Heart right ventricle (tissue), 16 donors: ENCODE measurements at regions of chr3 and their contacts with region 1.

Region 1: DNA sequence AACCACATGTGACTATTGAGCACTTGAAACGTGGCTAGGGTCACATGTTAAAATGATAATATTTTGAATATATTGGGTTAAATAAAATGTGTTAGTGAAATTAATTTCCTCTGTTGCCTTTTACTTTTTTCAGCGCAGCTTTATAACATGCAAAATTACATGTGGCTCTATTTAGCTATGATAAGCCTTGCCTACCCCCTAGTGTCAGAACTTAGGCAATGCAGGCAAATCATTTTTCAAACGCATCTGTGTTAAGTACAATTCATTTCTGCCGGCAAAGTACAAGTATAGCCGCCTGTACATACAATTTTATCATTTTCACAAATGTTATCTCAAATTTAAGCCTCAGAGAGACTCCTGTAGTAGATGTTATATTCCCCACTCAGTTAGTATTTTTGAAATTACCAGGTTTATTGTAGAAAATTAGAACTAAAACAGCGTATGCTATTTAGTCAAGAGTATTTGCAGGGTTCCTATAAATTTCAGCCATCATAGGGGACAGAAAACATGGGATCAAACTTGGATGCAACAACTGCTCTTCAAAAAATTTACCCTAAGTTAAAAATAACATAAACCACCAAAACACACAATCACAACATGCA is 56.1 kb downstream of the TAFA4 start:
- DNase-seq: peak in 1 of 2 donors; percentile 14
- ATAC-seq: peak in 2 of 8 donors; percentile 51 to 54
- H3K4me3 ChIP-seq: no peak overlapping the region
- H3K27ac ChIP-seq: no peak overlapping the region
- H3K4me1 ChIP-seq: no peaks in the 10 kb centered on the region
- H3K27me3 ChIP-seq: peaks cover 0 to 69% (median 13%) of the 10 kb centered on the region in 7 donors
- CTCF ChIP-seq: peak; percentile 73 to 90 (median 84)

Region 2: DNA sequence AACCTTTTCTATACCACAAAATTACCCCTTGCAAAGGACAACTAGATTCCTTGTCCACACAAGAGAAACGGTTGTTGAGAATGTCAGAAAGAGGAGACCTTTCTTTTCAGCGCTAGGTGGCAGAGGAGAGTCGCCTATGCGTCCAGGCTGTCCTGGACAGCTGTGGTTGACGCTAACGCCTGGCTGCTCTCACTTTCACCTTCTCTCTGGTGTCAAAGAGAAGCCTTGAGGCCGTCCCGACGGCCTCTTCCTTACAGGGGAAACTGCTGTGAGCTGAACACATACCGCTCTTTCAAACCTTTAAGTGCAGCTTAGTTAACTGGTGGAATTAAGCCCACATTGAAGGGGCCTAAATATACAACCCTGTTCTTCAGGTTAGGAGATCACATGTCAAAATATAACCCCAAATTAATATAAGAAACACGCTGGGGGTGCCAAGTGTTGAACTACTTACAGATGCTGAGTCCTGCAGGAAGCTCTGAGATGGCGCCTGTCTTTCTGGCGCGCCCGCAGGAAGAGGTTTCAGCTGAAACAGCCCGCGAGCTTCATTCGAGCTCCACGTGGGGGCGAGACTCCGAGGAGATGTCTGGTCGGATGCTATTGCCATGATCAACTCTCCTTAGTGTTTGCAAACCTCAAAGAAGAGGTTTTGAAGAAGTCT is 1904.2 kb before region 1 on chr3:
- intact Hi-C with region 1: loop called in 2 of 10 experiments (anchors 10 kb)
- DNase-seq: peak; percentile 58 to 76
- ATAC-seq: peak; percentile 92 to 99 (median 96)
- H3K4me3 ChIP-seq: peak overlapping the region in 9 of 10 donors; percentile 12 to 52 (median 42)
- H3K27ac ChIP-seq: peak overlapping the region in 4 of 10 donors; percentile 2 to 55 (median 28)
- H3K4me1 ChIP-seq: peaks cover 0 to 13% (median 6%) of the 10 kb centered on the region in 9 donors
- H3K27me3 ChIP-seq: peaks cover 0 to 14% (median 7%) of the 10 kb centered on the region in 7 donors
- CTCF ChIP-seq: peak; percentile 66 to 91 (median 86)

Region 3: DNA sequence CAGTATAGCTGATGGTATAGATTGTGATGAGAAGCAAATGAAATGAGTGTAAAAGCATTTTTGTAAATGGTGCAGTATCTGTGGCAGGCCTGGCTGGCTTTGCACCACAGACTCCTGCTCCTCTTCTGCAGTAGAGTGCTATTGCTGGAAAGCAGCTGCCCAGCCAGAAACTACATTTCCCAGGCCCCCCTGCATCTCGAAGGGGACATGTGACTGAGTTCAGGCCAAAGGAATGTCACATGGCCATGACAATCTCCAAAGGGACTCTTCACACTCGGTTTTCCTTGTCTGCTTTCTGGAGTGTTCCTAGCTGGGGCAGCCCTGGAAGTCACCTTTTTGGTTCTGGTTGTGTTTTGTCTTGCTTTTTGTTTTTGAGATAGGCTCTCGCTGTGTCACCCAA is 1498.9 kb before region 1 on chr3:
- intact Hi-C with region 1: loop called in 8 of 10 experiments (anchors 5 to 10 kb)
- DNase-seq: no peak
- ATAC-seq: no peak
- H3K4me3 ChIP-seq: no peak overlapping the region
- H3K27ac ChIP-seq: no peak overlapping the region
- H3K4me1 ChIP-seq: peaks cover 0 to 6% (median 0%) of the 10 kb centered on the region in 9 donors
- H3K27me3 ChIP-seq: no peaks in the 10 kb centered on the region
- CTCF ChIP-seq: no peak

Region 4: GRCh38 chr3:67790043-67790442 is 1086.2 kb before region 1 on chr3:
- intact Hi-C with region 1: loop called in 1 of 10 experiments (anchors 10 kb)
- DNase-seq: peak; percentile 11 to 25
- ATAC-seq: peak in 5 of 8 donors; percentile 41 to 61 (median 50)
- H3K4me3 ChIP-seq: no peak overlapping the region
- H3K27ac ChIP-seq: no peak overlapping the region
- H3K4me1 ChIP-seq: no peaks in the 10 kb centered on the region
- H3K27me3 ChIP-seq: no peaks in the 10 kb centered on the region
- CTCF ChIP-seq: peak; percentile 29 to 63 (median 55)

Region 5: GRCh38 chr3:68953816-68954444 is 77.7 kb after region 1 on chr3:
- intact Hi-C with region 1: no loop called
- DNase-seq: no peak
- ATAC-seq: no peak
- H3K4me3 ChIP-seq: no peak overlapping the region
- H3K27ac ChIP-seq: no peak overlapping the region
- H3K4me1 ChIP-seq: no peaks in the 10 kb centered on the region
- H3K27me3 ChIP-seq: peaks cover 0 to 22% (median 10%) of the 10 kb centered on the region in 7 donors
- CTCF ChIP-seq: no peak